Heart right ventricle (tissue), 16 donors: ENCODE measurements at regions of chr2 and their contacts with region 1.

Region 1: DNA sequence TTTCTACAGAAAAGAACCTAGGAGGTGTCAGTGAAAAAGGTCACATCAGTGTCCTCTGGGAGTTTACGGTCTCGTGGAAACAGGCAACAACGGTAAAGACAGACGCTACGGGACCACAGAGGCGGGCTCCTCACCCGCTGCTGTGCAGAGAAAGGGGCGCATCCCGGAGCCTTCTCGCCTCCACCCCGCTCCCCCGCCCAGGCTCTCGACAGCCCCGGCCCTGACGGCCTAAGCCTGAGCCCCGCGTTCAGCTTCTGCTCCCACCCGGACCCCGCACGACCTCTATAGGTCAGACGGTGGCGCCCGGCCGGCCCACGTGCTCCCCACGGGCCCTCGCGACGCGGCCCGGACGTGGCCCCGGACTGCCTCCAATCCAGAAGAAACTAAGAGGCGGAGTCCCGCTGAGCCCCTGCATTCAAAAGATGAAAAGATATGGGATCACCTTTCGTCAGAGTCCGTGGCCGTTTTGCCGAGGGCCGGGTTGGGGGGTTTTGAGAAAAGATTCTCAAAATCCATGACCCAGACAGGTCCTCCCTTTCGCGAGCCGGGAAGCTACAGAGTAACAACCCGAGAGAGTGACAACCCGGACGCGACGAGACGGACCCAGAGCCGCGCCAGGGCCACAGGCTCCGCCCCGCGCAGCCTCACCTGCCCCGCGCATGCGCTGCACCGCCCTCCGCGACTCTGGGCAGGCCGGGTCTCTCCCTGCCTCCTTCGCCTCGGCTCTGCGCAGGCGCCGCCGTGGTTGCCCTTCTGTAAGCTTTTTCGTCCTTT is at the start of gene ZC3H8:
- DNase-seq: peak; percentile 93 to 97
- ATAC-seq: peak; percentile 99 to 100 (median 99)
- H3K4me3 ChIP-seq: peak within 1 kb of the TSS; percentile 52 to 84 (median 73)
- H3K27ac ChIP-seq: peak within 1 kb of the TSS; percentile 33 to 91 (median 86)
- H3K4me1 ChIP-seq: peaks cover 0 to 42% (median 14%) of the 10 kb centered on the region in 9 donors
- H3K27me3 ChIP-seq: no peaks in the 10 kb centered on the region
- CTCF ChIP-seq: peak in 3 of 9 donors; percentile 10 to 26 (median 15)
- total RNA-seq, gene ZC3H8: 7.0 to 13.3 (median 11.0) TPM

Region 2: DNA sequence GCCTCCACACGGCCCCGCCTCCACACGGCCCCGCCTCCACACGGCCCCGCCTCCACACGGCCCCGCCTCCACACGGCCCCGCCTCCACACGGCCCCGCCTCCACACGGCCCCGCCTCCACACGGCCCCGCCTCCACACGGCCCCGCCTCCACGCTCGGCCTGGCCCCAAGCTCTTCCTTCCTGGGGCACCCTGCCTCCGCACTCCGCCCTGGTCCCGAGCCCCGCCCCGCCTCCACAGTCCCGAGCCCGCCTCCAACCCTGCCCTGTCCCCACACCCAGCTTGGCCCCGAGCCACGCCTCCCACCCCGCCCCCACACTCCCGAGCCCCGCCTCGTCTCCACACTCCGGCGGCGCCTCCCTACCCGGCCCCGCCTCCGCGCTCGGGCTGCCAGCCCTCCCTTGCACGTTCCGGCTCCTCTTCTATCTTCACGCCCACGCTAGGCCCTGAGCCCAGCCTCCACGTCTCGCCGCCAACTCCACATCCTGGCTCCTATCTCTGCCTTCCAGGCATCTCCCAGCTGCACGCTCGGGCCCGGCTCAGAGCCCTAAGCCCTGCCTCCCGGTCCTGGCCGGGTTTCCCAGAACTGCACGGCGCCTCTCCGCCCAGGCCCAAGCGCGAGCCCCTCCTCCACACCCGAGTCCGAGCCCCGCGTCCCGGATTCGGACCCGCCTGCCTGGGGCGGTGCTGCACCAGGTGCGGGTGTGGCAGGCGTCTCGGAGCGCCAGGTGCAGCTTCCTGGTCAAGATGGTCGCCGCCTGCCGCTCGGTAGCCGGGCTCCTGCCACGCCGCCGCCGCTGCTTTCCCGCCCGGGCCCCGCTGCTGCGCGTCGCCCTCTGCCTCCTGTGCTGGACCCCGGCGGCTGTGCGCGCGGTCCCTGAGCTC is 199.6 kb before region 1 on chr2 and contains the start of gene TMEM87B:
- intact Hi-C with region 1: loop called in 4 of 10 experiments (anchors 10 kb)
- DNase-seq: peak; percentile 98 to 100
- ATAC-seq: peak; percentile 84 to 93 (median 87)
- H3K4me3 ChIP-seq: peak within 1 kb of the TSS; percentile 79 to 96 (median 84)
- H3K27ac ChIP-seq: peak within 1 kb of the TSS; percentile 92 to 100 (median 98)
- H3K4me1 ChIP-seq: peaks cover 0 to 44% (median 27%) of the 10 kb centered on the region in 9 donors
- H3K27me3 ChIP-seq: no peaks in the 10 kb centered on the region
- CTCF ChIP-seq: no peak
- total RNA-seq, gene TMEM87B: 4.4 to 11.1 (median 5.7) TPM

Region 3: DNA sequence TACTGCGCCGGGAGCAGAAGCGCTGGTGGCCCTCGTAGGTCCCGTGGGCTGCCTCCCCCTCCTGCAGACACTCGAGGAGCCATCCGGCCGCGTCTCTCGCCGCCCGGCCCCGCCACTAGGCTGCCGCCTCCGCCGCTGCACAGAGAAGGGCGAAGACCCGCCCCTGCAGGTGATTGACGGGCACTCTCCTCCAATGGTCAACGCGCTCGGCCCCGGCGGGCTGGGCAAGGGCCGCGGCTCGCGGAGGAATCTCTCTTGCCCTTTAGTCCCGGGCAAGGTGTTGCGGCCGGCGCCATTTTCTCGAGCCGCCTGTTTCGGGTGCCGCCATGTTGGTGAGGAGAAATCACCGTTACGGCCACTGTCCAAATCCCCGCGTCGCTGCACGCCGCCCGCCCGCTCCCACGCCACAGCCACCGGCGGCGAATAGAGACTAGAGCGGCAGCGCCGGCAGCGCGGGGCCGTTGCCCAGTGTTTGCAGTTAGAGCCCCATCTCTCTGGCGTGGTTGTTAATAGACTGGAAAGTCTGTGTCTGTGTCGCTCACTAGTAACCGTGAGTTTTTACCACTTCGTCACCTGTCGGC is 20.7 kb after region 1 on chr2 and contains the start of gene ZC3H6:
- intact Hi-C with region 1: loop called in 3 of 10 experiments (anchors 2 kb)
- DNase-seq: peak; percentile 99 to 100
- ATAC-seq: peak; percentile 98 to 99 (median 99)
- H3K4me3 ChIP-seq: peak within 1 kb of the TSS; percentile 71 to 94 (median 82)
- H3K27ac ChIP-seq: peak within 1 kb of the TSS; percentile 99 to 100 (median 100)
- H3K4me1 ChIP-seq: peaks cover 0 to 28% (median 11%) of the 10 kb centered on the region in 9 donors
- H3K27me3 ChIP-seq: no peaks in the 10 kb centered on the region
- CTCF ChIP-seq: peak in 5 of 9 donors; percentile 15 to 42 (median 27)
- total RNA-seq, gene ZC3H6: 13.9 to 29.5 (median 25.8) TPM

Region 4: GRCh38 chr2:112433932-112434730 is 179.5 kb after region 1 on chr2:
- intact Hi-C with region 1: loop called in 3 of 10 experiments (anchors 5 to 10 kb)
- DNase-seq: no peak
- ATAC-seq: no peak
- H3K4me3 ChIP-seq: peak overlapping the region in 1 of 10 donors; percentile 61
- H3K27ac ChIP-seq: no peak overlapping the region
- H3K4me1 ChIP-seq: peaks cover 0 to 14% (median 4%) of the 10 kb centered on the region in 9 donors
- H3K27me3 ChIP-seq: peaks cover 0 to 14% (median 4%) of the 10 kb centered on the region in 7 donors
- CTCF ChIP-seq: no peak

Region 5: GRCh38 chr2:112584134-112584890 is 329.7 kb after region 1 on chr2 and contains the start of gene CHCHD5:
- intact Hi-C with region 1: loop called in 1 of 10 experiments (anchors 10 kb)
- DNase-seq: peak; percentile 91 to 96
- ATAC-seq: peak; percentile 92 to 97 (median 94)
- H3K4me3 ChIP-seq: peak within 1 kb of the TSS; percentile 53 to 75 (median 63)
- H3K27ac ChIP-seq: peak within 1 kb of the TSS; percentile 81 to 97 (median 93)
- H3K4me1 ChIP-seq: peaks cover 4 to 38% (median 30%) of the 10 kb centered on the region in 9 donors
- H3K27me3 ChIP-seq: no peaks in the 10 kb centered on the region
- CTCF ChIP-seq: peak in 8 of 9 donors; percentile 26 to 59 (median 39)
- total RNA-seq, gene CHCHD5: 20.8 to 30.3 (median 25.0) TPM